Activated CD4-positive, alpha-beta T cell treated with anti-CD3 and anti-CD28 coated beads, Interleukin-2, amount 10 ng/mL, durations not matched to agents 24 days and 14 days (primary cell): ENCODE measurements at regions of chr2 and their contacts with region 1.

Region 1: GRCh38 chr2:96868555-96869280 is 1.2 kb downstream of the SEMA4C start:
- DNase-seq: peak; percentile 90
- H3K4me3 Mint-ChIP-seq: peak overlapping the region; percentile 87
- H3K27ac Mint-ChIP-seq: peak overlapping the region; percentile 84
- H3K4me1 Mint-ChIP-seq: peaks cover 21% of the 10 kb centered on the region
- H3K27me3 Mint-ChIP-seq: peaks cover 10% of the 10 kb centered on the region

Region 2: DNA sequence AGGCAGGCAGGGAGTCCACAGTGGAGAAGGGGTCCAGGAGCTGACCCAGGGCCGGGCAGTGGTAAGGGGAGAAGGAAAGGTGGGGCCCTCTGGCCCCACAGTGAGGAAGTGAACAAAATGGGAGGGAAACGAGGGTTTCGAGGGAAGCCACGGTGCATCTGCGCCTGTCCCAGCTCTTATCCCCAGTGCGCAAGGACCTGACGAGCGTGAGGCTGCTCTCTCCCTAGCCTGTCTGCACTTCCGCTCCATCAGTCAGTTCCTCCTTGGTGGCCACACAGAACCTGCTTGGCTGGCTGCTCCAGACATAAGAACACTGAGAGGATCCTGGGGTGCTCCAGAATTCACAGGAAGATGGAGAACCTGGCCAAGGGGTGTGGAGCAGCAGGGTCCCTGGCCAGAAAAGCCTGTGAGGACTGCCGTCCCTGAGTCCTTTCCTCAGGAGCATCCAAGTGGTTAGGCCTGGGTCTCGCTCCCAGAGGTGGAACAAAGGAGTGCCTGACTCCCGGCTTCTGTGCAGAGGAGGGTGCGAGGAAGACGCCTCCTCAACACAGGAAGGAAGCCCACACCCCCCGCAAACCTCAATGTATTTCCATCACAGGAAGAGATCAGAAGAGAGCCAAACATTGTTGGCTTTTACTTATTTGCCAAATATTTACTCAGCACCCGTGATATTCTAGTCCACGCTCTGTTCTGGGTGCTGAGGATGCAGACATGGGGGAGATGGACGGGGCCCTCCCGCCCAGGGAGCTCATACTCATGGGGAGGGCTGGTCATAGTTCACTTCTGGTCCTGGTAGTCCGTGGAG is 44.9 kb after region 1 on chr2:
- intact Hi-C with region 1: loop called (anchors 2 kb)
- DNase-seq: peak; percentile 90
- H3K4me3 Mint-ChIP-seq: peak overlapping the region; percentile 82
- H3K27ac Mint-ChIP-seq: peak overlapping the region; percentile 88
- H3K4me1 Mint-ChIP-seq: peaks cover 34% of the 10 kb centered on the region
- H3K27me3 Mint-ChIP-seq: no peaks in the 10 kb centered on the region